ENCODE measurements at regions of chr18 and their contacts with region 1.

Region 1: GRCh38 chr18:32158108-32158624 is 31.7 kb upstream of the MEP1B start:
- DNase-seq: peak; percentile 61 to 62
- ATAC-seq: peak; percentile 98
- H3K4me3 ChIP-seq: peak overlapping the region in 3 of 4 donors; percentile 34 to 42 (median 34)
- H3K27ac ChIP-seq: no peak overlapping the region
- H3K4me1 ChIP-seq: no peaks in the 10 kb centered on the region
- H3K27me3 ChIP-seq: no peaks in the 10 kb centered on the region
- CTCF ChIP-seq: peak; percentile 73 to 86 (median 81)
- POLR2A ChIP-seq: no peak

Region 2: GRCh38 chr18:32200766-32201165 is 42.6 kb after region 1 on chr18:
- in situ Hi-C with region 1: no loop called
- intact Hi-C with region 1: no loop called
- DNase-seq: no peak
- ATAC-seq: no peak
- H3K4me3 ChIP-seq: no peak overlapping the region
- H3K27ac ChIP-seq: no peak overlapping the region
- H3K4me1 ChIP-seq: no peaks in the 10 kb centered on the region
- H3K27me3 ChIP-seq: no peaks in the 10 kb centered on the region
- CTCF ChIP-seq: no peak
- POLR2A ChIP-seq: no peak

Region 3: GRCh38 chr18:32271672-32272208 is 113.6 kb after region 1 on chr18:
- in situ Hi-C with region 1: no loop called
- intact Hi-C with region 1: loop called (anchors 10 kb)
- DNase-seq: no peak
- ATAC-seq: peak; percentile 64 to 72
- H3K4me3 ChIP-seq: no peak overlapping the region
- H3K27ac ChIP-seq: no peak overlapping the region
- H3K4me1 ChIP-seq: no peaks in the 10 kb centered on the region
- H3K27me3 ChIP-seq: no peaks in the 10 kb centered on the region
- CTCF ChIP-seq: peak in 4 of 5 experiments; percentile 56 to 71 (median 64)
- POLR2A ChIP-seq: no peak

Measured in gastrocnemius medialis (tissue), 4 donors.